Calu3 (cell line): ENCODE measurements at regions of chr15 and their contacts with region 1.

Region 1: DNA sequence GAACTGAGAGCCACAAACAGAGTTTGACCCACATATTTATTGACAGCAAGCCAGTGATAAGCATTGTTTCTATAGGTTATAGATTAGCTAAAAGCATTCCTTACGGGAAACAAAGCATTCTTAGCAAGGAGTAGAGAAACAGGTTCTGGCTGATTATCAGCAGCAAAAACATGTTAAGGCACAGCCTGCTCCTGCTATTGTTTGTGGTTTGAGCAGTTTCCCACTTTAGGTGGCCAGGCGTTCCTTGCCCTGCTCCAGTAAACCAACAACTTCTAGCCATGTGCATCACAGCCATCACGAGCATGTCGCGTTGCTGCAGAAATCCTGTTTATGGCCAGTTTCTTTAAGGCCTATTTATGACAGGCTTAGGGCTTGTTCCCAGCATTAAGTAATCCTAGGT is 44.7 kb upstream of the C2CD4B start:
- DNase-seq: peak; percentile 70
- H3K4me3 Mint-ChIP-seq: peak overlapping the region; percentile 65
- H3K27ac Mint-ChIP-seq: peak overlapping the region; percentile 85
- H3K4me1 Mint-ChIP-seq: peaks cover 31% of the 10 kb centered on the region
- H3K27me3 Mint-ChIP-seq: no peaks in the 10 kb centered on the region
- CTCF ChIP-seq: no peak

Region 2: GRCh38 chr15:62171882-62172281 is 37.9 kb before region 1 on chr15:
- CTCF ChIA-PET with region 1: no interaction called
- intact Hi-C with region 1: loop called (anchors 2 kb)
- DNase-seq: no peak
- H3K4me3 Mint-ChIP-seq: no peak overlapping the region
- H3K27ac Mint-ChIP-seq: no peak overlapping the region
- H3K4me1 Mint-ChIP-seq: peaks cover 20% of the 10 kb centered on the region
- H3K27me3 Mint-ChIP-seq: no peaks in the 10 kb centered on the region
- CTCF ChIP-seq: no peak

Region 3: GRCh38 chr15:62248277-62248984 is 38.6 kb after region 1 on chr15:
- CTCF ChIA-PET with region 1: interaction called, 14 read pairs
- intact Hi-C with region 1: loop called (anchors 2 kb)
- DNase-seq: peak; percentile 71
- H3K4me3 Mint-ChIP-seq: peak overlapping the region; percentile 23
- H3K27ac Mint-ChIP-seq: peak overlapping the region; percentile 69
- H3K4me1 Mint-ChIP-seq: peaks cover 42% of the 10 kb centered on the region
- H3K27me3 Mint-ChIP-seq: no peaks in the 10 kb centered on the region
- CTCF ChIP-seq: no peak